ENCODE measurements at regions of chr19 and their contacts with region 1.

Region 1: GRCh38 chr19:47483800-47484690 is at the start of gene KPTN:
- DNase-seq: peak; percentile 92
- ATAC-seq: peak; percentile 87
- H3K4me3 Mint-ChIP-seq: peak within 1 kb of the TSS; percentile 99
- H3K27ac Mint-ChIP-seq: peak within 1 kb of the TSS; percentile 96
- H3K4me1 Mint-ChIP-seq: peaks cover 32% of the 10 kb centered on the region
- H3K27me3 Mint-ChIP-seq: no peaks in the 10 kb centered on the region
- total RNA-seq, gene KPTN: 8.0 to 8.6 TPM

Region 2: DNA sequence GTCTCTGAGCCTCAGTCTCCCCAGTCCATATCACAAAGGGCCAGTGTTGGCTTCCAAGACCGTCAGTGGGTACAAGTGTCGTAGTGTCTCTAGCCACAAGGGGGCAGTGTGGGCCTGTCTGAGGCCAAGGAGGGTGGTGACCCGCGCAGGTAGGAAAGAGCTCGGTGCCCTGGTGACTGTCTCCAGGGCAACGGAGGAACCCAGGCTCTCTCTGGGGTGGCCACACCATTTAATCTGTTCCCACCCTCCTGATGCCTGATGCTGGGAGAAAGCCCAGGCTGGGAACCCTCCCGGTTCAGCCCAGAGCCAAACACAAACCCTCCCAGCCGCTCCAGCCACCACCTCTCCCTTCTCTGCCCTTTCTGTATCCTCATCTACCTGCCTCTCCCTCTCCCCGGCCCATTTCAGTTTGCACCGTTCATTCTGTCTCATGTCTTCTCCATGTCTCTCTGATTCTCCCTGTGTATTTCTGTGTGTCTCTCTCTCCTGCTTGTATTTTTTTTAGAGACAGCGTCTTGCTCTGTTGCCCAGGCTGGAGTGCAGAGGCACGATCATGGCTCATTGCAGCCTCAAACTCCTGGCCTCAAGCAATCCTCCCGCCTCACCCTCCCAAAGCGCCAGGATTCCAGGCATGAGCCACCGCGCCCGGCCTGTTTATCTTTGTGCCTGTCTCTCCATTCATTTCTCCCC is 47.2 kb before region 1 on chr19:
- POLR2A ChIA-PET with region 1: interaction called, 22 read pairs
- DNase-seq: peak; percentile 84
- ATAC-seq: peak; percentile 81
- H3K4me3 Mint-ChIP-seq: peak overlapping the region; percentile 2
- H3K27ac Mint-ChIP-seq: peak overlapping the region; percentile 26
- H3K4me1 Mint-ChIP-seq: peaks cover 40% of the 10 kb centered on the region
- H3K27me3 Mint-ChIP-seq: peaks cover 13% of the 10 kb centered on the region

Region 3: DNA sequence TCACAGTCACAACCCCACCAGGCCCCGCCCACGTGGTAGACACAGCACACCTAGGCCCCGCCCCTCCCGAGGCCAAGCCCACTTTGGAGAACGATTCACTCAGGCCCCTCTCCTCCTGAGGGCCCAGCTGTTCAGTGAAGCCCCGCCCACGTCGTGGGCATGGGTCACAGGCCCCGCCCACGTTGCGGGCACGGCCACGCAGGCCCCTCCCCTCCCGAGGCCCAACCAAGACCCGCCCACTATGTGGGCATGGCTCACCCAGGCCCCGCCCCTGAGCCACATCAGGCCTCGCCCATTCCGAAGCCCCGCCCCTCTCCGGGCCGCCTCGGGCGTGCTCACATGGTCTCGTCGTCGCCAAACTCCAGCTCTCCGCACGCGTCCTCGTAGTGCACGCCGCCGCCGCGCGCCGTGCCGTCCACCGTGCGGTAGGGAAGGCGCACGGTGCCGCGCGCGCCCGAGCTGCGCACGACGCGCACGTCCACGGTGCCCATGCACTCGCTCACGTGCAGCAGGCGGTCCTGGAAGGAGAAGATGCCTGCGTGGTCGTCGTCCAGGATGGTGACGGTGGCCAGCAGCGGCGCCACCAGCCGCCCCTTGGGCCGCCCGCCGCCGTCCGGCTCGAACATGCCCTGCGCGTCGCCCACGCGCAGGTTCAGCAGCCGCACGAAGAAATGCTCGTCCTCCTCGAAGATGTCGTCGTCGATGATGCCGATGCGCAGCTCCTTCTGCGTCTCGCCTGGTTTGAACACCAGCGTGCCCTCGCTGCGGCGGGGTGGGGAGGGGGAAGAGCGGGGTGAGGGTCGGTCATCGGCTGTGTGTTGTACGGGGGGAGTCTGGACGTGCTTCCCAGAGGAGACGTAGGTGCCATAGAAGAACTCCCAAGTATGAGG is 36.3 kb before region 1 on chr19:
- POLR2A ChIA-PET with region 1: interaction called, 13 read pairs
- DNase-seq: peak; percentile 86
- ATAC-seq: peak; percentile 52
- H3K4me3 Mint-ChIP-seq: peak overlapping the region; percentile 81
- H3K27ac Mint-ChIP-seq: peak overlapping the region; percentile 71
- H3K4me1 Mint-ChIP-seq: peaks cover 36% of the 10 kb centered on the region
- H3K27me3 Mint-ChIP-seq: peaks cover 64% of the 10 kb centered on the region

Region 4: DNA sequence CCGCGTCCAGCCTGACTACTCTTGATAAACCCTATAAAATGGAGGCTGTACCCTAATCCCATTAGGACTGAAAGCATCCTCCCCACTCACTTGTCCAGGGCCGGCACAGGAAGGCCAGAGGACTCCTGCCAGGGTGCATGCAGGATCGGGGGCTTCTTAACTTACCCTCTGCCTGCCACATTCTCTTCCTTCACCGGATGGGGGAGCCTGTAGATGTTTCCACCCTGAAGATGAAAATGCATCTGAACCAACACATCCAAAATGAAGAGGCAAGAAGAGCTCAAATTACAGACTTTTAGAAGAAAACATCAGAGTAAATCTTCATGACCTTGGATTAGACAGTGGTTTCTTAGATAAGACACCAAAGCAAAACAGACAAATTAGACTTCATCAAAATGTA is 56.7 kb after region 1 on chr19:
- POLR2A ChIA-PET with region 1: no interaction called
- DNase-seq: no peak
- ATAC-seq: no peak
- H3K4me3 Mint-ChIP-seq: no peak overlapping the region
- H3K27ac Mint-ChIP-seq: peak overlapping the region; percentile 44
- H3K4me1 Mint-ChIP-seq: peaks cover 15% of the 10 kb centered on the region
- H3K27me3 Mint-ChIP-seq: peaks cover 9% of the 10 kb centered on the region

Measured in activated naive CD8-positive, alpha-beta T cell treated with anti-CD3 and anti-CD28 coated beads, Interleukin-2, amount 10 ng/mL, durations not matched to agents 7 days and 5 days (primary cell).